ENCODE measurements at regions of chr18 and their contacts with region 1.

Region 1: GRCh38 chr18:23540867-23541266 is 37.6 kb downstream of the RMC1 start:
- H3K4me3 Mint-ChIP-seq: no peak overlapping the region
- H3K27ac Mint-ChIP-seq: peak overlapping the region; percentile 78
- H3K4me1 Mint-ChIP-seq: peaks cover 61% of the 10 kb centered on the region
- H3K27me3 Mint-ChIP-seq: peaks cover 6% of the 10 kb centered on the region

Region 2: GRCh38 chr18:23529597-23529996 is 11.3 kb before region 1 on chr18:
- intact Hi-C with region 1: loop called (anchors 1 kb)
- H3K4me3 Mint-ChIP-seq: no peak overlapping the region
- H3K27ac Mint-ChIP-seq: peak overlapping the region; percentile 90
- H3K4me1 Mint-ChIP-seq: peaks cover 48% of the 10 kb centered on the region
- H3K27me3 Mint-ChIP-seq: peaks cover 6% of the 10 kb centered on the region

Region 3: GRCh38 chr18:23578891-23579653 is 38.2 kb after region 1 on chr18:
- intact Hi-C with region 1: loop called (anchors 5 kb)
- H3K4me3 Mint-ChIP-seq: peak overlapping the region; percentile 56
- H3K27ac Mint-ChIP-seq: peak overlapping the region; percentile 67
- H3K4me1 Mint-ChIP-seq: peaks cover 77% of the 10 kb centered on the region
- H3K27me3 Mint-ChIP-seq: peaks cover 3% of the 10 kb centered on the region

Measured in dendritic cell treated with granulocyte-macrophage colony-stimulating factor and Interleukin-4, amounts not matched to agents 40 ng/mL and 50 ng/mL, for 4 days (primary cell).